ENCODE measurements at regions of chr2 and their contacts with region 1.

Region 1: GRCh38 chr2:16281451-16282336 is 341.3 kb downstream of the MYCN start:
- DNase-seq: peak in 2 of 4 donors; percentile 37
- ATAC-seq: peak; percentile 88
- H3K4me3 ChIP-seq: no peak overlapping the region
- H3K27ac ChIP-seq: no peak overlapping the region
- H3K4me1 ChIP-seq: no peaks in the 10 kb centered on the region
- H3K27me3 ChIP-seq: no peaks in the 10 kb centered on the region
- CTCF ChIP-seq: peak; percentile 35 to 43

Region 2: GRCh38 chr2:15788830-15789229 is 492.9 kb before region 1 on chr2:
- intact Hi-C with region 1: loop called in 1 of 2 experiments (anchors 5 kb)
- DNase-seq: no peak
- ATAC-seq: no peak
- H3K4me3 ChIP-seq: no peak overlapping the region
- H3K27ac ChIP-seq: no peak overlapping the region
- H3K4me1 ChIP-seq: no peaks in the 10 kb centered on the region
- H3K27me3 ChIP-seq: peaks cover 0 to 15% of the 10 kb centered on the region in 2 donors
- CTCF ChIP-seq: no peak

Region 3: GRCh38 chr2:15939854-15940660 is 341.6 kb before region 1 on chr2 and contains the start of gene MYCN:
- intact Hi-C with region 1: loop called in 1 of 2 experiments (anchors 10 kb)
- DNase-seq: peak in 2 of 4 donors; percentile 61 to 83
- ATAC-seq: peak; percentile 39
- H3K4me3 ChIP-seq: peak within 1 kb of the TSS; percentile 31 to 33
- H3K27ac ChIP-seq: no peak within 1 kb of the TSS
- H3K4me1 ChIP-seq: peaks cover 23 to 50% of the 10 kb centered on the region in 2 donors
- H3K27me3 ChIP-seq: peaks cover 35 to 75% of the 10 kb centered on the region in 2 donors
- CTCF ChIP-seq: peak in 1 of 2 donors; percentile 72
- polyA plus RNA-seq, gene MYCN: 13.5 to 22.2 (median 18.6) TPM

Region 4: DNA sequence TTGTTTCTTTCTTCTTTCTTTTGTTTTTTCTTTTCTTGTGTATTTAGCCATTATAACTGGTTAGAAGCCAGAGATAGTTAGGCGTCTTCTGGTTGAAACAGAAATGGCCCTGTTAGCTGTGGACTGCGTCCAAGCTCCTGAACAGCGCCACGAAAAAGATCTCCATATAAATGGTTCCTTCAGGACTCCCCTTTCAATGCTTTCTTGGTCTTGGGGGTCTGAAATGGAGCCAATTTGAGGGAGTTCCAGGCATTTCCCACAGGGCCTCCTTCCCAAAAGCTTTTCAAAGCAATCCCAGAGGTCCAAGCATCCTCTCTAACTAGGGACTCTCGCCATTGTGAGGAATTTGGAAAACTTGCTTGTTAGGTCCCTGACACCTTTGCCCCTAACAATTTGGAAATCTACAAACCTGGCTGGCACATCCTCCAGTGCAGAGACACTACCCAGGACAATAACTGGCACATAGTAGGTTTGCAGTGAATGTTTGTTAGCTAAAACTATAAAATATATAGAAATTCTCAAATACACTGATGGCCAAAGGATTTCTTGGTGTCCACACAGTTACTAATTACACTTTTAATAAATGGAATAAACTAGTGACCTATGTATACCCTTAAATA is 261.2 kb before region 1 on chr2:
- intact Hi-C with region 1: no loop called
- DNase-seq: no peak
- ATAC-seq: no peak
- H3K4me3 ChIP-seq: no peak overlapping the region
- H3K27ac ChIP-seq: no peak overlapping the region
- H3K4me1 ChIP-seq: no peaks in the 10 kb centered on the region
- H3K27me3 ChIP-seq: peaks cover 0 to 22% of the 10 kb centered on the region in 2 donors
- CTCF ChIP-seq: no peak

Region 5: DNA sequence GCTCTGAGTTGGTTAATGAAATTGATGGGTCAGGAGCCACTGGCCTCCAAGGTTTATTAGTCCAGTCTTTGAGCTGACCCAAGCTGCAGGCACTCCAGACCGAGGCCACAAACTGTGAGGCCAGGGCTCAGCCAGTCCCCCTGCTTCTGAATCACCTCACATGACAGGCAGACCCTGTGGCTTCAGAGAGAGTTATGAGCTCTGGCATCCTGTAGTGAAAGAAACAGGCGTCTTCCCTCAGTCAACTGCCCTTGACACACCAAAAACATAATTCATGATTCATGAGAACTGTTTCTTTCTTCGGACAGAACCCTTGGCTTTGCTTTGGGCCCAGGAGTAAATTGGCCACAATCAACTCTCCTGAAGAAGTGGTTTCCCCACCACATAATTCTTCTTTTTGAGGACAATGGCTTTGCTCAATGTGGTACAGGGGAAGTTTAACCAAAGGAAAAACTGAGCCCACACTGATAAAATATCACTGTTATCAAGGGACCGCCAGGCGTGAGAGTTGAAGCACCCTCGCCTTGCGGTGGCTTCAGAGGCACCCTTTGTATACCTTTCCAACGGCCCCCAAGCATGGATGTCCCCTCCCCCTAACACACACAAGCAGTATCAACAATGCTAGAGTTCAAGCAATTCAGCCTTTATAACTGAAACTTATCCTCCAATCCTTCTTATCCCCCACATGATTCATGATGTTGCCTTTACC is 157.1 kb after region 1 on chr2:
- intact Hi-C with region 1: no loop called
- DNase-seq: no peak
- ATAC-seq: no peak
- H3K4me3 ChIP-seq: no peak overlapping the region
- H3K27ac ChIP-seq: no peak overlapping the region
- H3K4me1 ChIP-seq: no peaks in the 10 kb centered on the region
- H3K27me3 ChIP-seq: no peaks in the 10 kb centered on the region
- CTCF ChIP-seq: no peak